Tibial artery (tissue), 4 donors: ENCODE measurements at regions of chr1 and their contacts with region 1.

Region 1: DNA sequence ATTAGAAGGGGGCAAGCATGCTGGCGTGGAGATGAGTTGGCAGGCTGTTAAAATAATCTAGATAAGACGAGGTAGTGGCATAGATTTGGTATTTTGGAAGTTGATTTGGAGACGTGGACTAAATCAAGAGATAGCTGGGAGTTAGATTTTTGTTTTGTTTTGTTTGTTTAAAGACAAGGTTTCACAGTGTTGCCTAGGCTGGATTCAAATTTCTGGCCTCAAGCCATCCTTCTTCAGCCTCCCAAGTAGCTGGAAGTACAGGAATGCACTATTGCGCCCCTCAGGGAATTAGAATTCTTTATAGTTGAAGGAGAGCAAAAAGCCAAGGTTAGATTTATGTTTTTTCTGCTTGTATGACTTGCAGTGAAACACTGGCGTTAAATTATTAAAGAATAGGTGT is 22.3 kb upstream of the SNRPE start:
- DNase-seq: no peak
- H3K4me3 ChIP-seq: no peak overlapping the region
- H3K27ac ChIP-seq: peak overlapping the region in 1 of 2 donors; percentile 17
- H3K4me1 ChIP-seq: peaks cover 0 to 12% (median 0%) of the 10 kb centered on the region in 4 donors
- H3K27me3 ChIP-seq: no peaks in the 10 kb centered on the region
- CTCF ChIP-seq: no peak

Region 2: GRCh38 chr1:203569490-203570318 is 269.4 kb before region 1 on chr1:
- intact Hi-C with region 1: no loop called
- DNase-seq: no peak
- H3K4me3 ChIP-seq: no peak overlapping the region
- H3K27ac ChIP-seq: no peak overlapping the region
- H3K4me1 ChIP-seq: peaks cover 0 to 16% (median 11%) of the 10 kb centered on the region in 4 donors
- H3K27me3 ChIP-seq: no peaks in the 10 kb centered on the region
- CTCF ChIP-seq: no peak

Region 3: DNA sequence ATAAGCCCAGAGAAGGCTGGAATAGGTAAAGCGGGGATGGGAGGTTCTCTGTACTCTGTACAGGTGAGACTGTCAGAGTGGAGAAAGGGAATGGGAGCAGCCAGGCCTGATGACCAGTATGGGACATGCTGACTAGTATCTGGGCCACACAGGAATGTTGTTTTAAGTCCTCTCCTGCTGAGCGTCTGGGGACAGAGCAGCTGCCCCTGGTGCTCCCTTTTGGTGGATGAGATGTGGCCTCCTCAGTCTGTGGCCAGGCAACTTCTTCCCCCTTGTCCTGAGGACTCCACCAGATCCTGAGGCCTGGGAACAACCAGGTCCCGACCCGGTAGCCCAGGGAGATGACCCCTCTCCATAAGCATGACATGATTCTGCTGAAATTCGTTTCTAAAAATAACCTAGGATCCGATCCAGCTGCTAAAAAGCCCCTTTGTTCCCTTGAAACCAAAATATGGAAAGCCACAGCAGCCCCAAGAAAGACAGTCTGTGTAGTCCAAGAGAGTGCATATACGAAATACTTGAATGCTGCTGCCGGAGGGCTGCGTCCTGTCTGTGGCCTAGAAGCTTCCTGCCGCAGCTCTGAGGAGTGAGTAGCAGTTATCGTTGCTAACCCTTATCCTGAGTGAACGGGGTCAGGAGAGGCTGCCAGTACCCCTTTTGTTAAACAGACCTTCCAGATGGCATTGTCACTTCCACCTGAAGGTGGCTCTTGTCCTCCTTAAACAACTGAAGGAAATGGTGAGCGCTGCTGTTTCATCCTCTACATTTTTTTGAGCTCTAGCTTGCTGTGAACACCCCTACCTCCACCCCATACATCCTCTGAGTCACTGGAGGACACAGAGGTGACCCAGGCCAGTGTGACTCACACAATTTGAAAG is 165.3 kb before region 1 on chr1:
- intact Hi-C with region 1: no loop called
- DNase-seq: peak; percentile 69 to 84
- H3K4me3 ChIP-seq: no peak overlapping the region
- H3K27ac ChIP-seq: peak overlapping the region; percentile 85 to 87
- H3K4me1 ChIP-seq: peaks cover 0 to 93% (median 61%) of the 10 kb centered on the region in 4 donors
- H3K27me3 ChIP-seq: no peaks in the 10 kb centered on the region
- CTCF ChIP-seq: no peak

Region 4: DNA sequence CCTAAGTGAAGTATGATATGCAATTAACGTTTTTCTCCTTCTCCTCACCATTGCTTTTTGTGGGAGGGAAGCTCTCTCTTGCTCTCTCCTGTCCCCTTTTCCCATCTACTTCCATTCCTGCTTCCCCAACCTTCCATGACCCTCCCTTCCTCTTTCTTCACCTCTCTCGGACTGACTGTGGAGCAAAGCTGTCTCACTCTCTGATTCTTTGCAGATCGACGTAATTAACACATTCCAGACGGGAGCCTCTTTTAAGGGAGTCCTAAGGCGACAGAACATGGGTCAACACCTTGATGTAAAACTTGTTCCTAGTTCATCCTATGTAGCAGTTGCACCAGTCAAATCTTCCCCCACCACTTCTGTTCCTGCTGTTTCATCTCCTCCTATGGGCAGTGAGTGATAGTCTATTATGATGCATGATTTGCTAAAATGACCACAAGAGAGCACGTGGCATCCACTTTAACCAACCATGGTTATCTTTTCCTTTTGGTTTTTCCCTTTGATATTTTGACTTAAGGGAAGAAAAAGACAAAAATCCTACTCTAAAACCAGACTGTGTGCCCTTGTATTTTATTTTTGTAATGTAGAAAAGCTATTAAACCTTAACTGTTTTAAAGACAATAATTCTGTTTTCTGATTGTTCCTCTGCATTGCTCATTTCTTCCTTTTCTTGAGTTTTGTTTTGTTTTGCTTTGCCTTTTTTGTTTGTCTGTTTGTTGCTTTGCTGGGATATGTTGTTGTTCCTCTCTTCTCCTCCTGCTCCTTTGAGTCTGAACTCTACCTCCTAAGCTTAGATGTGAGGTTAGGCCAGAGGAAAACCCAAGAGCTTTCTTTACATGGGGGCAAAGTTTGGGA is 105.8 kb before region 1 on chr1:
- intact Hi-C with region 1: loop called (anchors 10 kb)
- DNase-seq: no peak
- H3K4me3 ChIP-seq: no peak overlapping the region
- H3K27ac ChIP-seq: no peak overlapping the region
- H3K4me1 ChIP-seq: no peaks in the 10 kb centered on the region
- H3K27me3 ChIP-seq: no peaks in the 10 kb centered on the region
- CTCF ChIP-seq: no peak

Region 5: DNA sequence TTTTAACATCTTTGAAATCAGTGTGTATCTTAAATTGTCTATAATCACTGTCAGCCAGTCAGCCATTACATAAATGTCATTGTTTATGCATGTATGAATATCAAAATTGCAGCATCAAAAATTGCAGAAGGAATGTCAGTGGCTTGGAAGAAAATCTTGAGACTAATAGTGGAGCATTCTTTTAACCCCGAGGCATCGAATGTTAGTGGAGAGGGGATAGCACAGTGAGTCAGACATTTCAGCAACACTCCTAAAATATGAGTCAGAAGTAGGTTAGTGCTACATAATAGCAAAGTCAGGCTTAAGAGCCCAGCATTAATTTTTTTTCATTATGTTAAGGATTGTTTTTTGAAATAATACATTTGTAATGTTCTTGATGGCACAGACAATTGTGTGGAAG is 67.9 kb after region 1 on chr1:
- intact Hi-C with region 1: no loop called
- DNase-seq: no peak
- H3K4me3 ChIP-seq: no peak overlapping the region
- H3K27ac ChIP-seq: no peak overlapping the region
- H3K4me1 ChIP-seq: no peaks in the 10 kb centered on the region
- H3K27me3 ChIP-seq: no peaks in the 10 kb centered on the region
- CTCF ChIP-seq: no peak

Region 6: DNA sequence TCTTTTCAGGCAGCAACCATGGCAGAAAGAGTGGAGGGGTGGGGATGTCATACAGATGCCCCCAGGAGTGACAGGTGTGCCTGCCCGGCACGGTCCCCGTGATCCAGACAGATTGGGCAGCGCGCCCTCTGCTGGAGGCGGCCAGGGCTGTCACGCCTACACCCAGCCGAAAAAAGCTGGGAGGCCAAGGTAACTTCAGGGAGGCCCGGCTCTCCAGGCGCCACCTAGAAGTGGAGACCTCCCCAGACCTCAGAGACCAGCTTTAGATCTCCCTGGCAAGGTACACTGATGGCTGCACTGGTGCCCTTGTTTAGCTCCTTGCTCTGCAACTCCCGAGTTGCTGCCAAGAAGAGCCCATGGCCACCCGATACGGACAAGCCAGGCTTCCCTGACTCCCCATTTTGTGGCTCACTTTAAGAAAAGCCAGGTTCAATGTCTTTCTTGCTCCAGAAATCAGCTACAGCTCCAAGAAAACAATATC is 368.1 kb after region 1 on chr1:
- intact Hi-C with region 1: no loop called
- DNase-seq: peak in 1 of 2 donors; percentile 45
- H3K4me3 ChIP-seq: no peak overlapping the region
- H3K27ac ChIP-seq: no peak overlapping the region
- H3K4me1 ChIP-seq: peaks cover 0 to 5% (median 2%) of the 10 kb centered on the region in 4 donors
- H3K27me3 ChIP-seq: peaks cover 0 to 38% of the 10 kb centered on the region in 2 donors
- CTCF ChIP-seq: peak; percentile 79 to 81